Ovary (tissue), 10 donors: ENCODE measurements at regions of chr12 and their contacts with region 1.

Region 1: DNA sequence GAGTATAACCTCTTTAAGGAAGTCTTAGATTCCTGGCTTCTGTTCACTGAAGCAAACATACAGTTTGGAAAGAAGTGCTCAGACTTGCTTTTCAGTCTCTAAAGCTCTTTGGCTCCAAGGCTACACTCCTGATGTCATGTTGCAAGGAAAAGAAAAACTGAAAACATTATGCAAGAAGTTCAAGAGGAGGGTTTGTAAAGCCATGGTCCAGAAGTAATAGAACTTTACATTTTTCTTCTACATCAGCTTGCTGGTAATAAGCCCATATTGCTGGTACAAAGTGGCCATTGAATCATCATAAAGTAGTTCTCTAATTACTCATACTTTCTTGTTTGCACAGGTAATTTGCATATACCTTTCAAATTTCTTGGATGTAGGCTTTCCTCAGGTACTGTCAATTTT is 83.6 kb downstream of the BBS10 start:
- DNase-seq: no peak
- H3K4me3 ChIP-seq: no peak overlapping the region
- H3K27ac ChIP-seq: no peak overlapping the region
- H3K4me1 ChIP-seq: no peaks in the 10 kb centered on the region
- H3K27me3 ChIP-seq: no peaks in the 10 kb centered on the region
- CTCF ChIP-seq: no peak
- EP300 ChIP-seq: no peak
- POLR2A ChIP-seq: no peak

Region 2: GRCh38 chr12:76226397-76226796 is 38.2 kb before region 1 on chr12:
- intact Hi-C with region 1: no loop called
- DNase-seq: no peak
- H3K4me3 ChIP-seq: no peak overlapping the region
- H3K27ac ChIP-seq: no peak overlapping the region
- H3K4me1 ChIP-seq: no peaks in the 10 kb centered on the region
- H3K27me3 ChIP-seq: no peaks in the 10 kb centered on the region
- CTCF ChIP-seq: no peak
- EP300 ChIP-seq: no peak
- POLR2A ChIP-seq: no peak

Region 3: GRCh38 chr12:76249501-76249900 is 15.1 kb before region 1 on chr12:
- intact Hi-C with region 1: loop called in 1 of 4 experiments (anchors 2 kb)
- DNase-seq: no peak
- H3K4me3 ChIP-seq: no peak overlapping the region
- H3K27ac ChIP-seq: no peak overlapping the region
- H3K4me1 ChIP-seq: no peaks in the 10 kb centered on the region
- H3K27me3 ChIP-seq: no peaks in the 10 kb centered on the region
- CTCF ChIP-seq: no peak
- EP300 ChIP-seq: no peak
- POLR2A ChIP-seq: no peak